ENCODE measurements at regions of chr10 and their contacts with region 1.

Region 1: DNA sequence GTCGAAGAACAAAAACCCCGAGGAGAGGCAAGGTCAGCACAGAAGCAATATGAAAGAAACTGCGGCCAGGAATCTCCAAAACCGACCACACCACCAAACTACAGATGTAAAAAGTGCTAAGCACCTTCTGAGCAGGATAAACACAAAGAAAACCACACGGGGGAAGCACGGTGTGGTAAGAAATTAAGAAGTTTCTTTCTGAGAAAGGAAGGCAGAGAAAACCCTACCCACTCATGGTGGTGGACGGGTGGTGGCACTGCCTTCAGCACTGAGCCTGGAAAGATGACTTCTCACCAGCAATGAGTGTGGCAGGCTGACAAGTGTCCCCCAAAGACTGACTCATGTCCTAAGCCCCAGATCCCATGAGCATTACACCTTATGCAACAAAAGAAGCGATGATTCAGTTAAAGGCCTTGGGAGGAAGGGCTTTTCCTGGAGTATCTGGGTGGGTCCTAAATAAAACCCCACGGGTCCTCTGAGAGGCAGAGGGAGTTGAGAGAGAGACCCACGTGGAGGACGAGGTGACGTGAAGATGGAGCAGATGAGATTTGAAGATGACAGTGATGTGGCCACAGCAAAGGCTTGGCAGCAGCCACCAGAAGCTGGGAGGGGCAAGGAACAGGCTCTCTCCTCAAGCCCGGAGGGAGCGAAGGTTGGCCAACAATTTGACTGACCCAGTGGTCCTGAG is 124.9 kb downstream of the DLG5 start:
- DNase-seq: peak; percentile 19
- H3K4me3 Mint-ChIP-seq: no peak overlapping the region
- H3K27ac Mint-ChIP-seq: peak overlapping the region; percentile 73
- H3K4me1 Mint-ChIP-seq: peaks cover 27% of the 10 kb centered on the region
- H3K27me3 Mint-ChIP-seq: no peaks in the 10 kb centered on the region

Region 2: GRCh38 chr10:77820349-77820748 is 18.7 kb after region 1 on chr10:
- intact Hi-C with region 1: loop called (anchors 1 kb)
- DNase-seq: no peak
- H3K4me3 Mint-ChIP-seq: peak overlapping the region; percentile 21
- H3K27ac Mint-ChIP-seq: peak overlapping the region; percentile 74
- H3K4me1 Mint-ChIP-seq: peaks cover 17% of the 10 kb centered on the region
- H3K27me3 Mint-ChIP-seq: no peaks in the 10 kb centered on the region